Activated CD4-positive, alpha-beta T cell treated with anti-CD3 and anti-CD28 coated beads for 36 hours (primary cell): ENCODE measurements at regions of chr6 and their contacts with region 1.

Region 1: GRCh38 chr6:90080876-90081481 is 186.7 kb downstream of the GJA10 start:
- DNase-seq: peak; percentile 92
- ATAC-seq: peak; percentile 62
- H3K4me3 Mint-ChIP-seq: peak overlapping the region; percentile 93
- H3K27ac Mint-ChIP-seq: peak overlapping the region; percentile 99
- H3K4me1 Mint-ChIP-seq: peaks cover 83% of the 10 kb centered on the region
- H3K27me3 Mint-ChIP-seq: no peaks in the 10 kb centered on the region

Region 2: GRCh38 chr6:89819336-89820130 is 261.4 kb before region 1 on chr6 and contains the start of gene MDN1:
- CTCF ChIA-PET with region 1: no interaction called
- POLR2A ChIA-PET with region 1: no interaction called
- intact Hi-C with region 1: loop called (anchors 2 to 5 kb)
- DNase-seq: peak; percentile 94
- ATAC-seq: peak; percentile 94
- H3K4me3 Mint-ChIP-seq: peak within 1 kb of the TSS; percentile 81
- H3K27ac Mint-ChIP-seq: peak within 1 kb of the TSS; percentile 96
- H3K4me1 Mint-ChIP-seq: peaks cover 22% of the 10 kb centered on the region
- H3K27me3 Mint-ChIP-seq: no peaks in the 10 kb centered on the region
- total RNA-seq, gene MDN1: 48.6 to 59.5 TPM

Region 3: DNA sequence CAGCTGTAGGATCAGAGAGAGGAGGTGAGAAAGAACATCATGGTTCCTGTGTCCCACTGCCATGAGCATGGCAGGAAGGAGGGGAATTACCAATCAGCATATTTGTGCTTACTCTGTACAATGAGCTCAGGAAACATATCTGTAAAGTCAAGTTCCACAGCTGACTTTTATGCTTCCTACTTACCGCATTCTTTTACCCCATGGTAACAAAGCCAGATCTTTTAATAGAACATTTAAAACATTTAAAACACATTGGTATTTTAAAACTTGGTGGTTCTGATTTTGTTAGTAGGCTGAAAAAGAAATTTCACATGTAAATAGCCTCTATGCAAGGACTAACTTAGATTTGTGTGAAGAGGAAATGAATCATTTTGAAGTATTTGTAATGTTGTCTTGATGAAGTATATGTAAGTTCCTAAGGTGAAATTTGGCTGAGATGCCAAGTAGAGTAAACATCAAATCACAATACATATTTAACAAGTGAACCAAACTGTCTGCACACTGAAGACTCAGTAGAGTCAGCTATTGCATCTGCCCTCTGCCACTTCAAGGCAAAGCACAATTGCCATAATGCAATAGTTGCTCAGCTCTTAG is 72.0 kb before region 1 on chr6:
- CTCF ChIA-PET with region 1: no interaction called
- POLR2A ChIA-PET with region 1: no interaction called
- intact Hi-C with region 1: loop called (anchors 1 kb)
- DNase-seq: peak; percentile 54
- ATAC-seq: peak; percentile 82
- H3K4me3 Mint-ChIP-seq: peak overlapping the region; percentile 18
- H3K27ac Mint-ChIP-seq: peak overlapping the region; percentile 95
- H3K4me1 Mint-ChIP-seq: peaks cover 68% of the 10 kb centered on the region
- H3K27me3 Mint-ChIP-seq: no peaks in the 10 kb centered on the region

Region 4: DNA sequence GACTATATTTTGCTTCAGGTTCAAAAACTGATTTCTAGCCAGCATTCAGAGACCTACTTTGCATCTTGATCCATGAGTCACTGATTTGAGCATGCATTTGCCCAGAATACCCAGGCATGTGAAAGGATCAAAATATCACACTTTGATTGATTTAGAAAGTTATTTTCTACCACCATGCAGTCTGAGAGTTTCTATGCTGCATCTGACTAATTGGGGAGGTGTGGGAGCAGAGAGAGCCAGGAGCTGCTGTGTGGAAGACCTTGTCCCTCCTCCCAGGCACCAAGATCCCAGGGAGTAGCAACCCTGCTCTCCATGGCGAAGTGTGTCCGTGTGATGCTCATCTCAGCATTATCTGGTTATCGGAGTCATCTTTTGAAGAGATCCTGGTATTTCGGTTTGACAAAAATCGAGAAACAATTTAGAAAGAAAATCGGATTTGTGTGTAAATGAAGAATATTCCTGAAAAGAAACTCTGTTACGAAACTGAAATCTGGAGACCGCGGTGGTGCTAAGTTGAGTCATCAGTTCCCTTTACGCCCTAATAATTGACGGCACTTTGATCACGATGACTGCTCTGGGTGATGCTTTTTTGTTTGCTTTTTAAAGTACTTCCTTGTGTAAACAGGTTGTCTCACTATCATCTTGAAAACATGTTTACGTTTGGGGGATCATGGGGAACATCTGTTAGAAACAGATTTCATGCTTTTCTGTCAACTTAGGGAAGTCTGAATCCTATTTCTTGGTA is 22.2 kb after region 1 on chr6:
- CTCF ChIA-PET with region 1: interaction called, 6 read pairs
- POLR2A ChIA-PET with region 1: interaction called, 4 read pairs
- intact Hi-C with region 1: loop called (anchors 1 kb)
- DNase-seq: peak; percentile 58
- ATAC-seq: peak; percentile 80
- H3K4me3 Mint-ChIP-seq: peak overlapping the region; percentile 43
- H3K27ac Mint-ChIP-seq: peak overlapping the region; percentile 79
- H3K4me1 Mint-ChIP-seq: peaks cover 93% of the 10 kb centered on the region
- H3K27me3 Mint-ChIP-seq: no peaks in the 10 kb centered on the region

Region 5: DNA sequence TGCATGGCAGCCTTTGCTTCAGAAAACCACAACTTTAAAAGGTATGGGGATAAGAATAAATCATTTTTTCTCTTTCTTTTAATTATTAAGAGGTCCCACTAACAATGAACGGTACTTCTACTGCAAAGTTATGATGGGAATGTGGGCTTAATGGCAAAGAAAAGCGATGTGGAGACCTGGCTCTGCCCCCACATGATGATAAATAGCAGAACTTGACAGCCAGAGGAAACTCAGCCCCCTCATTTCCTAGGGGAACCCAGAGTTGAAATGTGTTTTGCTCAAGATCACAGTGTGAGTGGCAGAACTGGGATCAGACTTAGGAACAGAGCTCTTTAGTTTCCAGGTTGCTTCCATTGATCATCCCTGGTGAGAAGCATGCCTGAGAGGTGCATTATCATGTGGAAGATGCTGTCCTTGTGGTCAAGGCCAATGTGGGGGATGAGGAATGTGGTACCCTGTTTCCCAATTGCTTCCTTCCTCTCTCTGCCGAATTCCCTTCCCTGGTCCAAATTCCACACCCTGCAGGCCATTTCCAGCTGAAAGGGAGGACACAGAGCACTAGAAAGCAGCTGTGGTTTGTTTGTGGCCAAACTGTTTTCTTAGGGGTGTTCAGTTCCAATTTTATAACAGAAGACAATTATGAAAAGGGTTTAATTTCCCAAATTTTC is 149.7 kb after region 1 on chr6:
- CTCF ChIA-PET with region 1: no interaction called
- POLR2A ChIA-PET with region 1: no interaction called
- intact Hi-C with region 1: loop called in 1 of 2 experiments (anchors 5 kb)
- DNase-seq: no peak
- ATAC-seq: no peak
- H3K4me3 Mint-ChIP-seq: no peak overlapping the region
- H3K27ac Mint-ChIP-seq: peak overlapping the region; percentile 59
- H3K4me1 Mint-ChIP-seq: peaks cover 94% of the 10 kb centered on the region
- H3K27me3 Mint-ChIP-seq: no peaks in the 10 kb centered on the region

Region 6: DNA sequence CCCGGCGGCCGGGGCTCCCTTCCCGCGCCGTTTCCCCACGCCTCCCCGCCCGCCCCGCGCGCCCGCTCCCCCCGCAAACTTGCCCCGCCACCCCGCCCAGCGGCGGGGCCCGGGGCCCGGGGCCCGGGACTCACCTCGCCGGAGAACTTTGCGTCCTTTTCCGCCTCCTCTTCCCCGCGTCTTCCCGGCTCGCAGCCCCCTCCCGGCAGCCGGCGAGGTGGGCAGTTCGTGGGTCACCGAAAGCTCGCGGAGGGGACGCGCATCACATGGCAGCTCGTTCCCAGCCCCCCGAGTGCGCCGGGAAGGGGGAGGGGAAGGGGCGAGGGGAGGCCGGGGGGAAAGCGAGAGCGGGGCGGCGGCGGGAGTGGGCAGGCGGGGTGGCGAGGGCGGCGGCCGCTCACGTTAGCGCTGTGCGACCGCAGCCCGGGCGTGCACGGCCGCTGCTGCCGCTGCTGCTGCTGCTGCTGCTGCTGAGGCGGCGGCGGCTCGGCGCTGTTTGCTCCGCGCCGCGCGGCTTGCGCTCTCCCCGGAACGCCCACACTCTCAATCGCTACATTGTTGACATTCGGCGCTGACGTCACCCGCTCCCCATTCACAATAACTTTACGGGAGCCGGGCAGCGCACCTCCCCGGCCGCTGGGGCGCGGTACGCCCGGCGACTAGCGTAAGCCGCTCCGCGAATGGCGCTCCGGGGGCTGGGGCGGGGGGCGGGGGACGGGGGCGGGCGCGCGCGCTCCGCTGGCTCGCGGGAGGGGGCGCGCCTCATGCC is 215.6 kb after region 1 on chr6 and contains the start of gene BACH2:
- CTCF ChIA-PET with region 1: interaction called, 3 read pairs
- POLR2A ChIA-PET with region 1: interaction called, 4 read pairs
- intact Hi-C with region 1: loop called in 1 of 2 experiments (anchors 2 kb)
- DNase-seq: peak; percentile 99
- ATAC-seq: peak; percentile 66
- H3K4me3 Mint-ChIP-seq: peak within 1 kb of the TSS; percentile 86
- H3K27ac Mint-ChIP-seq: peak within 1 kb of the TSS; percentile 100
- H3K4me1 Mint-ChIP-seq: peaks cover 49% of the 10 kb centered on the region
- H3K27me3 Mint-ChIP-seq: peaks cover 7% of the 10 kb centered on the region
- total RNA-seq, gene BACH2: 74.7 to 87.3 TPM

Region 7: DNA sequence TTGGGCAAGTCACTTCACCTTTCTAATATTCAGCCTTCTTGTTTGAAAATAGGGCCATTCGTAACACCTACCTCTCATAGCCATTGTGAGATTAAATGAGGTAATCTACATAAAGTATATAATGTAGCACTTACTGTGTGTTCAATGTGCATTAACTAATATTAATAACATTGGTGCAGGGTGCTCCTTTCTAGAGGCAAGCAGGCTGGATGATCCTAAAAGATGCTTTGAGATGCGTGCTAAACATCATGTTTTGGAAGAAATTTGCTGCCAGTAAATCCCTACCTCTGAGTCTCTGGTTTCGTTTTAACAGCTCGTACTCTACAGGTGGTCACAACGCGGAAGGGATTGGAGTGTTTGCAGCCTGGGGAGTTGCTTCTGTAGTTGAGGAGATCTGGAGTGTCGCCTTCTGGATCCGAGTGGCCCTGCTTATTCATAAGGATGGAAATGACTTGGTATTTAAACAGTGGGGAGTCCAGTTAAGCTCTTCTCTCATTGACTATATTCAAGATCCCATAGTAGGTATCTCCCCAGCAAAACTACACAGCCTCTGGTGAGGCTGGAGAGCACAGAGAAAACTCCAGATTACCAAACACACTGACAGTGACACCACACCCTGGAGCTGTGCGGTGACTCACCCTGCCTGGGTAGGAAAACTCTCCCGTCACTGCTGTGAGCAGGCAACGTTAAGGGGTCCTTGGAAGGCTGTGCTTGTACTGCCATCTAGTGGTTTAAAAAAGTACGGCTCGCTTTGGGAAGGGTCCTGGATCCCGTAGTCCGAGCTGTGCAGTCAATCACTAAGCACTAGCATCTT is 398.0 kb after region 1 on chr6:
- CTCF ChIA-PET with region 1: interaction called, 5 read pairs
- POLR2A ChIA-PET with region 1: no interaction called
- intact Hi-C with region 1: loop called (anchors 1 to 2 kb)
- DNase-seq: peak; percentile 93
- ATAC-seq: peak; percentile 93
- H3K4me3 Mint-ChIP-seq: no peak overlapping the region
- H3K27ac Mint-ChIP-seq: peak overlapping the region; percentile 85
- H3K4me1 Mint-ChIP-seq: peaks cover 61% of the 10 kb centered on the region
- H3K27me3 Mint-ChIP-seq: no peaks in the 10 kb centered on the region